Calu3 (cell line): ENCODE measurements at regions of chr11 and their contacts with region 1.

Region 1: DNA sequence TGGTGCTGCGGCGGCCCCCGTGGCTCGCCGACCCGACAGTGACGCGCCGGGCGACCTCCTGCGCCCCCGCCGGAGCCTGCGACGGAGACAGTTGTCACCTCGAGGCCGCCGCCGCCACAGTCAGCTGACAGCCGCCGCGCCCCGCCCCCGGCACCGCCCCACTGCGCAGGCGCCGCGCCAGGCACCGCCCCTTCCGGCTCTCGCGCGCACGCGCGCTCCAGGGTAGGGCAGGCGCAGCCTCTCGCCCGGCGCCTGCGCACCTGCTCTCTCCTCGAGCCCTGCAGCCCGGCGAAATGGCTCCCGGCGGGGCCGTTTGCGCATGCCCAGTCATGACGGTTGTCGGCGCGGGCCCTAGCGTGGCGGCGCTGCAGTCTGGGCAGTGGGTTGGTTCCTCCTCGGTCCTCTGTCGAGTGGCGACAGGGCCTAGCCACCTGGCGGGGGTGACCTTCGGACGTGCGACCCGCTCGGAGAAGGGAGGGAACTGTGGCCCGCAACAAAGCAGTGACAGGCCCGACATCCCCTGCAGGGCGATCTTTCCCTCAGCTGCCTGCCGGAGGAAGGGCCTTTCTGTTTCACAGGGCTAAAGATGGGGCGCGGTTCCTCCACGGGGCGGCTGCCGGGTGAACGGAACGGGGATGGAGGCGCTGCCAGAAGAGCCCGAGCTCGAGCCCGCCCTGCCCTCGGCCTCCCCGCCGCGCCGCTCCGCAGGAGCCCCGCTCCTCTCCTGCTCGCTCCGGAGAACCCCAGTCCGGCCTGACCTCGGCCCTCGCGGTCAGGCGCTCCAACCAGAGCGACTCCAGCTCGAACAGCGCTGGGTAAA is at the start of gene TOLLIP:
- DNase-seq: peak; percentile 97
- H3K4me3 Mint-ChIP-seq: peak within 1 kb of the TSS; percentile 73
- H3K27ac Mint-ChIP-seq: peak within 1 kb of the TSS; percentile 87
- H3K4me1 Mint-ChIP-seq: peaks cover 23% of the 10 kb centered on the region
- H3K27me3 Mint-ChIP-seq: no peaks in the 10 kb centered on the region
- CTCF ChIP-seq: no peak
- total RNA-seq, gene TOLLIP: 53.4 and 64.9 TPM in 2 replicates

Region 2: GRCh38 chr11:1389103-1389931 is 79.6 kb after region 1 on chr11:
- CTCF ChIA-PET with region 1: interaction called, 4 read pairs
- intact Hi-C with region 1: loop called (anchors 5 kb)
- DNase-seq: peak; percentile 96
- H3K4me3 Mint-ChIP-seq: peak overlapping the region; percentile 58
- H3K27ac Mint-ChIP-seq: no peak overlapping the region
- H3K4me1 Mint-ChIP-seq: no peaks in the 10 kb centered on the region
- H3K27me3 Mint-ChIP-seq: peaks cover 49% of the 10 kb centered on the region
- CTCF ChIP-seq: no peak

Region 3: DNA sequence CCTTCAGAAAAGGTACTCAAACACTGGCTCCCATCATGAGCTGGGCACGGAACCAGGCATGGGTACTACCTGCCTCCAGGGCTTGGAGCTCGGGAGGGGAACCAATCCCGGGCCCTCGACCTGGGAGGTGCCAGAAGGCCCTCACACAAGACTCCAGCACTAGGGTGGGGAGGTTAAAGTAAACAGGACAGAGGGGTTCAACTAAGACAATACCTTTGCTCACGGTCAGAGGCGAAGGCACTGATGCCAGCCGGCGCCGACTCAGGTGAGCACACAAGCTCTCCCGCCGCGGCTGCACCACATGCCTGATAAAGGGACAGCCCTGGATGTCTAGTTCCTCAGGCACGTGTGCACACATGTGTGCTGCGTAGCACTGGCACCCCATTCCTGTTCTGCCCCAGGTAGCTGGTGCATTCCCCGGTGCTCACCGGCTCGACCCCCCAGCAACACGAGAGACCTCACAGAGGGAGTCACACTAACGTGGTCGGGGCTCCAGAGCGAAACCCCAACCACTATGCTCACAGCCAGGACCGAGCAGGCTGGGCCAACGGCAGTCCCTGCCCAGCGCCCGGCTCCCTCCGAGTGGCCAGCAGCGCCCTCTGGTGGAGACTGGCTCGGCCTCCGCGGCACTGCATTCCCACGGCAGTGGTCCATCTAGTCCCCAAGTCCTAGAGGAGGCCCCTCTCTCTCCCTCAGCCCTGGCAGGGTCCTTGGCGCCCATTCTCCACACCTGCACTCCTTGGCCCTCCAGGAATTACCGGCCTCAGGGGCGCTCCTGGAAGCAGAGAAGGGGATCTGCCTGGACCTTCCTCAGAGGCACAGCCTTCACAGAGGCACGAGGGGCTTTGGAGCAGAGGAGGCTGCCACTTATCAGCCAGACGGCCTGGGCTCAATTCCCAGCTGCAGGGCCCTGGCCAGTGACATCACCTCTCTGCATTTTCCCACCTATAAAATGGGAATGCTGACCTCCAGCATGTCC is 205.7 kb after region 1 on chr11:
- CTCF ChIA-PET with region 1: no interaction called
- intact Hi-C with region 1: loop called (anchors 10 kb)
- DNase-seq: peak; percentile 87
- H3K4me3 Mint-ChIP-seq: no peak overlapping the region
- H3K27ac Mint-ChIP-seq: no peak overlapping the region
- H3K4me1 Mint-ChIP-seq: no peaks in the 10 kb centered on the region
- H3K27me3 Mint-ChIP-seq: no peaks in the 10 kb centered on the region
- CTCF ChIP-seq: peak; percentile 90